ENCODE measurements at regions of chr3 and their contacts with region 1.

Region 1: GRCh38 chr3:99218468-99218867 is 317.0 kb upstream of the DCBLD2 start:
- DNase-seq: no peak
- H3K4me3 ChIP-seq: no peak overlapping the region
- H3K27ac ChIP-seq: no peak overlapping the region
- H3K4me1 ChIP-seq: peaks cover 3% of the 10 kb centered on the region
- H3K27me3 ChIP-seq: no peaks in the 10 kb centered on the region
- CTCF ChIP-seq: no peak
- POLR2A ChIP-seq: no peak

Region 2: DNA sequence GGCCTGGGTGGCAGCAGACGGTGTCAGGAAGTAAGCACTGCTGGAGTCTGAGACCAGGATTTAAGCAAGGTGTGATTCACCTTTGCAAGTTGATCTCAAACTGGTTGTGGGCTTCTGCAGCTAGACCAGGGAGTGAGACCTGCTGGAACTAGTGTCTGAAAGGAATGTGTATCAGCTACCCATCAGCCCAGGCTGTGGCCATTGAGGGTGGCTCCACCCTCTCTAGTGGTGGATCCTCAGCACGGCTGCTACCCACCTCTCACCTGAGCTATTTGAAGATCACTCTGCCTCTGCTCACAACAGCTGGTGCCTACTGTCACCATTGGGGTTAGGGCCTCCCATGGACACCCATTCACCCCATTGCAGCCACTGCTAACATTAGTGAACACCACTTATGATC is 176.7 kb before region 1 on chr3:
- CTCF ChIA-PET with region 1: no interaction called
- POLR2A ChIA-PET with region 1: no interaction called
- dilution Hi-C with region 1: no loop called
- intact Hi-C with region 1: no loop called
- DNase-seq: no peak
- H3K4me3 ChIP-seq: no peak overlapping the region
- H3K27ac ChIP-seq: no peak overlapping the region
- H3K4me1 ChIP-seq: no peaks in the 10 kb centered on the region
- H3K27me3 ChIP-seq: peaks cover 0 to 1% of the 10 kb centered on the region in 2 experiments
- CTCF ChIP-seq: no peak
- POLR2A ChIP-seq: no peak

Region 3: GRCh38 chr3:99253963-99254355 is 35.5 kb after region 1 on chr3:
- CTCF ChIA-PET with region 1: no interaction called
- POLR2A ChIA-PET with region 1: no interaction called
- dilution Hi-C with region 1: no loop called
- intact Hi-C with region 1: loop called (anchors 1 kb)
- DNase-seq: no peak
- H3K4me3 ChIP-seq: no peak overlapping the region
- H3K27ac ChIP-seq: no peak overlapping the region
- H3K4me1 ChIP-seq: no peaks in the 10 kb centered on the region
- H3K27me3 ChIP-seq: no peaks in the 10 kb centered on the region
- CTCF ChIP-seq: no peak
- POLR2A ChIP-seq: no peak

Region 4: DNA sequence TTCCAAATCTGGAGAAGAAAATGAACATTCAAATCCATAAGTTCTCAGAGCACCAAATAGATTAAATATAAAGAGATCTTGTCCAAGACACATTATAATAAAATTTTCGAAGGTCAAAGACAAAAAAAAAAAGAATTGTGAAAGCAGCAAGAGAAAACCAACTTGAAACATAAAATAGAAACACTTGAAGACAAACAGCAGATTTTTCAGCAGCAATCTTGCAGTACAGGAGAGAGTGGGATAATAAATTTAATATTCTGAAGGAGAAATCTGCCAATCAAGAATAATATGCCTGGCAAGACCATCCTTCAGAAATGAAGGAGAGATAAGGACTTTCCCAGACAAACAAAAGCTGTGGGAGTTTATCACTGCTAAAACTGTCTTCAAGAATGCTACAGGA is 269.4 kb after region 1 on chr3:
- CTCF ChIA-PET with region 1: no interaction called
- POLR2A ChIA-PET with region 1: no interaction called
- dilution Hi-C with region 1: no loop called
- intact Hi-C with region 1: no loop called
- DNase-seq: no peak
- H3K4me3 ChIP-seq: no peak overlapping the region
- H3K27ac ChIP-seq: no peak overlapping the region
- H3K4me1 ChIP-seq: peaks cover 11% of the 10 kb centered on the region
- H3K27me3 ChIP-seq: no peaks in the 10 kb centered on the region
- CTCF ChIP-seq: no peak
- POLR2A ChIP-seq: no peak

Region 5: GRCh38 chr3:100125161-100125938 is 906.9 kb after region 1 on chr3:
- CTCF ChIA-PET with region 1: no interaction called
- POLR2A ChIA-PET with region 1: no interaction called
- dilution Hi-C with region 1: no loop called
- intact Hi-C with region 1: no loop called
- DNase-seq: peak; percentile 88
- H3K4me3 ChIP-seq: peak overlapping the region in 1 of 3 experiments; percentile 5
- H3K27ac ChIP-seq: peak overlapping the region; percentile 41
- H3K4me1 ChIP-seq: peaks cover 18% of the 10 kb centered on the region
- H3K27me3 ChIP-seq: no peaks in the 10 kb centered on the region
- CTCF ChIP-seq: no peak
- POLR2A ChIP-seq: no peak